ENCODE measurements at regions of chr18 and their contacts with region 1.

Region 1: GRCh38 chr18:12038639-12039417 is 54.8 kb upstream of the ANKRD62 start:
- DNase-seq: peak; percentile 69 to 97 (median 82)

Region 2: GRCh38 chr18:11654736-11655605 is 383.9 kb before region 1 on chr18:
- intact Hi-C with region 1: loop called (anchors 5 kb)
- DNase-seq: peak in 9 of 10 donors; percentile 56 to 95 (median 68)

Region 3: GRCh38 chr18:11733031-11733430 is 305.8 kb before region 1 on chr18:
- intact Hi-C with region 1: loop called (anchors 2 kb)
- DNase-seq: peak; percentile 71 to 97 (median 82)

Region 4: GRCh38 chr18:11937874-11938478 is 100.9 kb before region 1 on chr18:
- intact Hi-C with region 1: loop called (anchors 1 kb)
- DNase-seq: peak; percentile 29 to 96 (median 78)

Region 5: DNA sequence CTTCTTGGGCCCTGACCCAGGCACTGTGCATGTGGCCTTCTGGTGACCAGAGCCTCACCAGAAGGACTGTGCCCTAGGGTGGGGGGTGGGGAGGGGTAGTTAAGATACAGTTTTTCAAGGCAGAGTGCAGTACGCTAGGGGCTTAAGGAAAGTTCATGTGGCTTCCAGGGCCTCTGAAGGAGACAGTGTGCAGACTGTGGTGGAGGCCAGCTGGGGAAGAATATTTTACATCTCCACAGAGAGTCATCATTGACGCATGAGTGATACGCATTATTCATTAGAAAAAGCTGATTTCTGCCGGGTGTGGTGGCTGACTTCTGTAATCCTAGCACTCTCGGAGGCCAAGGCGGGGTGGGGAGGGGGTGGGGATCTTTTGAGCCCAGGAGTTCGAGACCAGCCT is 62.0 kb before region 1 on chr18:
- intact Hi-C with region 1: no loop called
- DNase-seq: peak in 1 of 10 donors; percentile 18

Region 6: GRCh38 chr18:11995445-11996189 is 43.2 kb before region 1 on chr18:
- intact Hi-C with region 1: no loop called
- DNase-seq: peak in 9 of 10 donors; percentile 38 to 93 (median 61)

Region 7: DNA sequence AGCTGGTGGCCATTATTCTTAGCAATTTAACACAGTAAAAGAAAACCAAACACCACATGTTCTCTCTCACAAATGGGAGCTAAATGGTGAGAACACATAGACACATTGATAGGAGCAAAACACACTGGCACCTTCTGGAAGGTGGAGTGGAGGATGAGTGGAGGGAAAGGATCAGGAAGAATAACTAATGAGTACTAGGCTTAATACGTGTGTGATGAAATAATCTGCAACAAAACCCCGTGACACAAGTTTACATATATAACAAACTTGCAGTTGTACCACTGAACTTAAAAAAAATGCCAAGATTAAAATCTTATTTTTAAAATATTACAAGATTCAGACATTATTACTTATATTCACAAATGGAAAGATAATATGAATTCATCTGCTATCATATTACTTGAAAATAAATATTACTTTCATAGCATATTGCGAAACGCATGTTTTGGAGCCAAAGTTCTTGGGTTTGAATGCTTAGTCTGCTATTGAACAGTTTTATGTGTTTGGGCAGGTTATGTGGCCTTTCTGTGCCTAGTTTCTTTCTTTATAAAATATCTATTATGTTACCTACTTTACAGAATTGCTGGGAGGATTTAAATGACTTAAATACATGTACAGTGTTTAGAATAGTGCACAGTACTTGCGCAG is 75.3 kb after region 1 on chr18:
- intact Hi-C with region 1: no loop called
- DNase-seq: no peak

Measured in posterior cingulate gyrus (tissue), 11 donors.